CD14-positive monocyte (primary cell): ENCODE measurements at regions of chr17 and their contacts with region 1.

Region 1: DNA sequence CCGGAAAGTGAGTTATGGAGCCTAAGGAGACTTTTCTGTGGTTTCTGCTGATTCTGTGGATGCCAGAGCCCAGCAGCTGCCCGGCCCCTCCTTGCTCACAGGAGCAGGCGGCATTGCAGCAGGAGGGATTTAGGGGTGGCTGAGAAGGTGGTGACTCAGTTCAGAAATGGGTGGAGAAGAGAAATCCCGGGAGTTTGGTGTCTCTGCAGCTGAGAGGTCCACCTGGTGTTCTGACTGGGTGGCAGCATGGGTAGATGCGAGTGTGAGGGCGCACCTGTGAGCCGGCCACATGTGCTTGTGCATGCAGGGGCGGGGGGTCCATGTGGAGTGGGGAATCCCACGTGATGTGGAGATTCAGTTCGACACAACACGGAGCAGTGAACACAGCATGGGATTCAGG is 16.1 kb upstream of the SPPL2C start:
- DNase-seq: no peak
- H3K4me3 ChIP-seq: no peak overlapping the region
- H3K4me3 Mint-ChIP-seq: peak overlapping the region in 1 of 2 donors; percentile 3
- H3K27ac ChIP-seq: no peak overlapping the region
- H3K27ac Mint-ChIP-seq: no peak overlapping the region
- H3K4me1 ChIP-seq: no peaks in the 10 kb centered on the region
- H3K4me1 Mint-ChIP-seq: no peaks in the 10 kb centered on the region
- H3K27me3 ChIP-seq: peaks cover 0 to under 1% of the 10 kb centered on the region in 2 donors
- H3K27me3 Mint-ChIP-seq: peaks cover 4 to 10% (median 5%) of the 10 kb centered on the region in 3 donors
- CTCF ChIP-seq: no peak

Region 2: DNA sequence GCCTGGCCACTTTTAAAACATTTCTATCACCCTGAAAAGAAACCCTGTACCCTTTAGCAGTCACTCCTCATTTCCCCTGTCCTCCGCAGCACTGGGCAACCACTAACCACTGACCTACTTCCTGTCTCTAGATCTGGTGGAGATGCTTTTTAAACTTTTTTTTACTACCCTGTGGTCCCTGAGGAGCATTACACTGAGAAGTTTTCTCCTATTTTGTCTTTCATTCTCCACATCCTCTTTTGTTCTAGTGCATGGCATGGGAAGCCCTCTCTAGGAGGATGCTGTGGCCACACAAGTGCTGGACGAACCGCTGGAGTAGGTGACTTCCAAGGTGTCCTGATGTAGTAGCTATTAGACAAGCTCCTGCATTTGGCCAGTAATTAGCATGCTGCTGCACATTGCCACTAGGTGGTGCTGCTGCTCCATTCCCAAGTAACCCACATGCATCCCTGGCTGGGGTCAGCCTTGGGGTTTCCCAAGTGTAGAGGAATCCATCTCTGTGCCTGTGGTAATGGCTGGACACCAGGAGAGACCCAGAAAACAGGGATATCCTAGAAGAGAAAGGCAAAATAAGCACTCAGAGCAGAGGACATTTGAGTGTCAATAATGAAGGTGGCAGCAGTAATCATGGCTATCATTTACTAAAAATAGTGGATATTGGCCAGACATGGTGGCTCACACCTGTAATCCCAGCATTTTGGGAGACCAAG is 188.3 kb before region 1 on chr17:
- intact Hi-C with region 1: loop called (anchors 1 to 2 kb)
- DNase-seq: peak; percentile 51 to 75 (median 69)
- H3K4me3 ChIP-seq: no peak overlapping the region
- H3K4me3 Mint-ChIP-seq: no peak overlapping the region
- H3K27ac ChIP-seq: no peak overlapping the region
- H3K27ac Mint-ChIP-seq: peak overlapping the region in 2 of 7 donors; percentile 4 to 53
- H3K4me1 ChIP-seq: no peaks in the 10 kb centered on the region
- H3K4me1 Mint-ChIP-seq: peaks cover 3% of the 10 kb centered on the region
- H3K27me3 ChIP-seq: peaks cover 0 to 1% of the 10 kb centered on the region in 2 donors
- H3K27me3 Mint-ChIP-seq: peaks cover 6 to 14% (median 9%) of the 10 kb centered on the region in 3 donors
- CTCF ChIP-seq: peak; percentile 95

Region 3: DNA sequence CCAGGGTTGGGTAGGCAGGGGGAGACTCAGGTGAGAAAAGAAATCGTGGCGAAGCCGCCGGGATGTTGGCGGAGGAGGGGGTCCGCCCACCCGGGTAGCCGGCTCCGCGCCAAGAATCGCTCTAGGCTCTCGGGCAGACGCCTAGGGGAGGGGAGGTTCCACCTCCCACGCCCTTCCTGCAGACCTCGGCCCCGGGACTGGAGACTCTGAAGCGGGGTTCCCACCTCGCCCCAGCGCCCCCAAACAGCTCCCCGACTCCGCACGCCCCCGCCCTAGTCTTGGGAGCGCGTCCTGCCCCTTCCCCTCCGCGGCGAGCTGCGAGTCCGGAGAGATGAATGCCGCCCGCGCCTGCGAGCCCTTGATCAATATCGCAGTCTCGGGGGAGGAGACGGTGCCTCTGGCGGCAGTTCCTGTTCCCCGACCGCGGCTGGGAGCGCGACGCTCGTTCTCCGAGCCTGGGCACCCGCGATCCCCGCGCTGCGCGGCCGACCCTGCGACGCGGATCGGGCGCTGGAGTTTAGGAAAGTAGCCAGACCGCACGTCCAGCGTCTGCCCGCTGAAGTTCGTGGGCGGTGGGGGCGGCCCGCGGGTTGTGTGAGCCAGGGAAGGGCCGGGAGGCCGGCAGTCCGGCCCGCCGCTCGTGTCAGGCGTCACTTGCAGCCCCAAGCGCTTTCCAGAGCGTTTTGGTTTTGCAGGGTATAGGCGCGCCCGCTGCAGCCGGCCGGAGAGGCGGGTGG is 43.7 kb before region 1 on chr17:
- intact Hi-C with region 1: no loop called
- DNase-seq: peak in 2 of 3 donors; percentile 6 to 13
- H3K4me3 ChIP-seq: peak overlapping the region in 1 of 3 experiments; percentile 53
- H3K4me3 Mint-ChIP-seq: peak overlapping the region; percentile 53 to 71
- H3K27ac ChIP-seq: no peak overlapping the region
- H3K27ac Mint-ChIP-seq: no peak overlapping the region
- H3K4me1 ChIP-seq: peaks cover 12% of the 10 kb centered on the region in 2 donors
- H3K4me1 Mint-ChIP-seq: peaks cover 8% of the 10 kb centered on the region
- H3K27me3 ChIP-seq: peaks cover 54 to 79% of the 10 kb centered on the region in 2 donors
- H3K27me3 Mint-ChIP-seq: peaks cover 78 to 95% (median 85%) of the 10 kb centered on the region in 3 donors
- CTCF ChIP-seq: no peak